IMR-90 (cell line): ENCODE measurements at regions of chr20 and their contacts with region 1.

Region 1: GRCh38 chr20:59571551-59572314 is 32.6 kb upstream of the PHACTR3 start:
- DNase-seq: peak; percentile 38
- ATAC-seq: peak; percentile 98
- H3K4me3 ChIP-seq: peak overlapping the region; percentile 20; the same call in 1 of the 2 replicates
- H3K27ac ChIP-seq: no peak overlapping the region
- H3K4me1 ChIP-seq: no peaks in the 10 kb centered on the region
- H3K27me3 ChIP-seq: peaks cover 3% of the 10 kb centered on the region
- CTCF ChIP-seq: peak; percentile 75
- POLR2A ChIP-seq: no peak
- RAD21 ChIP-seq: peak; percentile 34

Region 2: GRCh38 chr20:59940174-59940971 is 368.6 kb after region 1 on chr20 and contains the starts of genes FAM217B and PPP1R3D:
- CTCF ChIA-PET with region 1: no interaction called
- POLR2A ChIA-PET with region 1: no interaction called
- dilution Hi-C with region 1: no loop called
- in situ Hi-C with region 1: no loop called
- intact Hi-C with region 1: loop called (anchors 10 kb)
- DNase-seq: peak; percentile 96
- ATAC-seq: peak; percentile 97
- H3K4me3 ChIP-seq: peak within 1 kb of the TSS; percentile 75
- H3K27ac ChIP-seq: peak within 1 kb of the TSS; percentile 83
- H3K4me1 ChIP-seq: peaks cover 11% of the 10 kb centered on the region
- H3K27me3 ChIP-seq: no peaks in the 10 kb centered on the region
- CTCF ChIP-seq: peak; percentile 12; the same call in 1 of the 2 replicates
- POLR2A ChIP-seq: peak; percentile 63
- RAD21 ChIP-seq: 0 out of 2 replicates have a peak, but pooled peaks have one; percentile 1
- total RNA-seq, gene FAM217B: 3.0 and 3.9 TPM in 2 replicates
- total RNA-seq, gene PPP1R3D: 2.7 and 4.7 TPM in 2 replicates